Heart left ventricle (tissue), 16 donors: ENCODE measurements at regions of chr17 and their contacts with region 1.

Region 1: DNA sequence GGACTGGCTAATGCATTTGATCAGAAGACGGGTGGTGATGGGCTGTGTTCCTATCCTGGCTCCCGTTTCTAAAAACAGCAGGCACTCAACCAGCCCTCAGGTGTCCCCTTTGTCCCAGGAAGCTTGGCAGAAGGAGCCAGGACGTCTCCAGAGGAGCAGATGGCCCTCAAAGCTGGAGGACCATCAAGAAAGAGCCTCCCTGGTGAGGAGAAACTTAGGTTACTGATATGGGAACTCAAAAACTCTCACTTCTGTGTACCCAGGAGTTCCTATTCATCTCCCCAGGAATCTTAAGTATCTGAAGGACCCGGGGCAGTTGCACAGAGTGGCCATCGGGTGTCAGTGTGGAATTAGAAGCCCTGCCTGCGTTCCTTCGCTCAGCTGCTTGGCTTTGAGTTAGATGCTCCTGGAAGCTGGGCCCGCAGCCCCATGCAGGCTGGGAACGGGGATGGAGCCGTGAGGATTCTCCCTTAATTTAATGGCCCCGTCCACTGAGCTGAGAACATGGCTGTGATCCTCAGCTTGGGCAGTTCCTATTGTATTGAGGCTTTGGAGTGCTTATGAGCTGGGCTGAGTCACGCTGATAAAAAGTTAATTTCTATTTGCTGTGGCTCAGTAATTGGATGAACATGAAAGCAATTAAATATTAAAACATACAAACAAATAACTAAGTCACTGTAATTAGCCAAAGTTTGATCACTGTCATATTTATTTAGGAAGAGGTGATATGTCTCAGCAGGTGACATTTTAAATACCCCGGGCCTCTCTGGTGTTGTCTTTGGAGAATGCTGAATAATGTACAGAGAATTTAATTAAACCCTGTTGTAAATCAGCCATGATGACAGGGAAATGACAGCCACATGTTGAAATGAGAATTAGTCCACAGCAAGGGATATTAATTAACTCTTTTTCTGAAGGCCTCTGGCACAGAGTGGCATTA is 402.1 kb downstream of the SEC14L1 start:
- DNase-seq: peak; percentile 74 to 87 (median 81)
- ATAC-seq: peak; percentile 84 to 95 (median 92)
- H3K4me3 ChIP-seq: peak overlapping the region in 1 of 12 donors; percentile 4
- H3K27ac ChIP-seq: peak overlapping the region in 11 of 12 donors; percentile 27 to 89 (median 61)
- H3K4me1 ChIP-seq: peaks cover 0 to 29% (median 12%) of the 10 kb centered on the region in 12 donors
- H3K27me3 ChIP-seq: no peaks in the 10 kb centered on the region
- CTCF ChIP-seq: peak; percentile 83 to 98 (median 92)
- POLR2A ChIP-seq: no peak

Region 2: GRCh38 chr17:77602062-77602746 is 59.4 kb after region 1 on chr17:
- intact Hi-C with region 1: loop called in 2 of 10 experiments (anchors 2 kb)
- DNase-seq: peak in 4 of 5 donors; percentile 75 to 90 (median 83)
- ATAC-seq: peak; percentile 94 to 96 (median 95)
- H3K4me3 ChIP-seq: peak overlapping the region in 1 of 12 donors; percentile 1
- H3K27ac ChIP-seq: peak overlapping the region; percentile 81 to 98 (median 92)
- H3K4me1 ChIP-seq: peaks cover 0 to 37% (median 28%) of the 10 kb centered on the region in 12 donors
- H3K27me3 ChIP-seq: no peaks in the 10 kb centered on the region
- CTCF ChIP-seq: no peak
- POLR2A ChIP-seq: no peak

Region 3: GRCh38 chr17:77724876-77725615 is 182.2 kb after region 1 on chr17:
- intact Hi-C with region 1: loop called in 6 of 10 experiments (anchors 5 to 10 kb)
- DNase-seq: no peak
- ATAC-seq: no peak
- H3K4me3 ChIP-seq: no peak overlapping the region
- H3K27ac ChIP-seq: no peak overlapping the region
- H3K4me1 ChIP-seq: peaks cover 0 to 27% (median 8%) of the 10 kb centered on the region in 12 donors
- H3K27me3 ChIP-seq: no peaks in the 10 kb centered on the region
- CTCF ChIP-seq: no peak
- POLR2A ChIP-seq: no peak

Region 4: GRCh38 chr17:77772461-77772897 is 229.7 kb after region 1 on chr17:
- intact Hi-C with region 1: loop called in 1 of 10 experiments (anchors 5 kb)
- DNase-seq: peak; percentile 74 to 87 (median 81)
- ATAC-seq: peak; percentile 80 to 93 (median 86)
- H3K4me3 ChIP-seq: no peak overlapping the region
- H3K27ac ChIP-seq: peak overlapping the region in 3 of 12 donors; percentile 3 to 51 (median 4)
- H3K4me1 ChIP-seq: peaks cover 0 to 14% (median 8%) of the 10 kb centered on the region in 12 donors
- H3K27me3 ChIP-seq: no peaks in the 10 kb centered on the region
- CTCF ChIP-seq: peak; percentile 67 to 84 (median 76)
- POLR2A ChIP-seq: no peak

Region 5: GRCh38 chr17:77957857-77958715 is 415.3 kb after region 1 on chr17 and contains the start of gene TNRC6C:
- intact Hi-C with region 1: loop called in 1 of 10 experiments (anchors 5 kb)
- DNase-seq: peak; percentile 100
- ATAC-seq: peak; percentile 97 to 99 (median 98)
- H3K4me3 ChIP-seq: peak within 1 kb of the TSS; percentile 67 to 95 (median 79)
- H3K27ac ChIP-seq: peak within 1 kb of the TSS; percentile 71 to 96 (median 85)
- H3K4me1 ChIP-seq: peaks cover 6 to 50% (median 31%) of the 10 kb centered on the region in 12 donors
- H3K27me3 ChIP-seq: peaks cover 0 to 16% (median 0%) of the 10 kb centered on the region in 9 donors
- CTCF ChIP-seq: peak in 4 of 12 donors; percentile 24 to 36 (median 34)
- POLR2A ChIP-seq: peak; percentile 100
- total RNA-seq, gene TNRC6C: 11.1 to 24.7 (median 21.4) TPM

Region 6: GRCh38 chr17:78019367-78019975 is 476.6 kb after region 1 on chr17:
- intact Hi-C with region 1: loop called (anchors 1 to 5 kb)
- DNase-seq: no peak
- ATAC-seq: no peak
- H3K4me3 ChIP-seq: no peak overlapping the region
- H3K27ac ChIP-seq: peak overlapping the region in 1 of 12 donors; percentile 1
- H3K4me1 ChIP-seq: peaks cover 0 to 21% (median 4%) of the 10 kb centered on the region in 12 donors
- H3K27me3 ChIP-seq: no peaks in the 10 kb centered on the region
- CTCF ChIP-seq: peak; percentile 52 to 74 (median 60)
- POLR2A ChIP-seq: no peak